Psoas muscle (tissue), 8 donors: ENCODE measurements at regions of chr18 and their contacts with region 1.

Region 1: DNA sequence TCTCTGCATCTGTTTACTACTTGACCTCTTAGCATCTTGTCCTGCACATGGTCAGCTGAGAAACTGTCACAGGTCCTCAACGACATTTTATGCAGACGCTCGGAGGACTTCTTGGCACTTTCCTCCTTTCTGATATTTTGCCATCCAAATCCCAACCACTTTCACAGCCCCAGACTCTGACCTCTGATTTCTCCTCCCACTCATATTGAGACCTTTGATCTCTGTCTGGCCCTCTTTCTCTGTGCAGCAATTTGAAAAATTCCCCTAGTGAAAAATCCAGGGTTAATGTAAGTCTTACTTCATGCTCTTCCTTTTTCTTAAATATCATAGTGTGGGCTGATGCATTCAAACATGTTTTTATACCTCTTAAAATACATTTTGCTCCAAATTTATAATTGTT is 273.8 kb downstream of the CCDC102B start:
- DNase-seq: no peak
- ATAC-seq: no peak
- H3K4me3 ChIP-seq: no peak overlapping the region
- H3K27ac ChIP-seq: no peak overlapping the region
- H3K4me1 ChIP-seq: no peaks in the 10 kb centered on the region
- H3K27me3 ChIP-seq: no peaks in the 10 kb centered on the region
- CTCF ChIP-seq: no peak

Region 2: GRCh38 chr18:69127873-69128500 is 56.3 kb after region 1 on chr18:
- intact Hi-C with region 1: no loop called
- DNase-seq: no peak
- ATAC-seq: no peak
- H3K4me3 ChIP-seq: no peak overlapping the region
- H3K27ac ChIP-seq: no peak overlapping the region
- H3K4me1 ChIP-seq: no peaks in the 10 kb centered on the region
- H3K27me3 ChIP-seq: no peaks in the 10 kb centered on the region
- CTCF ChIP-seq: no peak

Region 3: GRCh38 chr18:70693246-70693645 is 1621.6 kb after region 1 on chr18:
- intact Hi-C with region 1: loop called in 1 of 2 experiments (anchors 5 kb)
- DNase-seq: no peak
- ATAC-seq: no peak
- H3K4me3 ChIP-seq: no peak overlapping the region
- H3K27ac ChIP-seq: no peak overlapping the region
- H3K4me1 ChIP-seq: no peaks in the 10 kb centered on the region
- H3K27me3 ChIP-seq: no peaks in the 10 kb centered on the region
- CTCF ChIP-seq: no peak